ENCODE measurements at regions of chr2 and their contacts with region 1.

Region 1: GRCh38 chr2:101113396-101114267 is 37.5 kb downstream of the TBC1D8 start:
- DNase-seq: peak; percentile 90
- ATAC-seq: peak; percentile 73
- H3K4me3 ChIP-seq: peak overlapping the region; percentile 40; the same call in 1 of the 2 replicates
- H3K27ac ChIP-seq: peak overlapping the region; percentile 94
- H3K4me1 ChIP-seq: peaks cover 61% of the 10 kb centered on the region
- H3K27me3 ChIP-seq: no peaks in the 10 kb centered on the region
- CTCF ChIP-seq: no peak

Region 2: DNA sequence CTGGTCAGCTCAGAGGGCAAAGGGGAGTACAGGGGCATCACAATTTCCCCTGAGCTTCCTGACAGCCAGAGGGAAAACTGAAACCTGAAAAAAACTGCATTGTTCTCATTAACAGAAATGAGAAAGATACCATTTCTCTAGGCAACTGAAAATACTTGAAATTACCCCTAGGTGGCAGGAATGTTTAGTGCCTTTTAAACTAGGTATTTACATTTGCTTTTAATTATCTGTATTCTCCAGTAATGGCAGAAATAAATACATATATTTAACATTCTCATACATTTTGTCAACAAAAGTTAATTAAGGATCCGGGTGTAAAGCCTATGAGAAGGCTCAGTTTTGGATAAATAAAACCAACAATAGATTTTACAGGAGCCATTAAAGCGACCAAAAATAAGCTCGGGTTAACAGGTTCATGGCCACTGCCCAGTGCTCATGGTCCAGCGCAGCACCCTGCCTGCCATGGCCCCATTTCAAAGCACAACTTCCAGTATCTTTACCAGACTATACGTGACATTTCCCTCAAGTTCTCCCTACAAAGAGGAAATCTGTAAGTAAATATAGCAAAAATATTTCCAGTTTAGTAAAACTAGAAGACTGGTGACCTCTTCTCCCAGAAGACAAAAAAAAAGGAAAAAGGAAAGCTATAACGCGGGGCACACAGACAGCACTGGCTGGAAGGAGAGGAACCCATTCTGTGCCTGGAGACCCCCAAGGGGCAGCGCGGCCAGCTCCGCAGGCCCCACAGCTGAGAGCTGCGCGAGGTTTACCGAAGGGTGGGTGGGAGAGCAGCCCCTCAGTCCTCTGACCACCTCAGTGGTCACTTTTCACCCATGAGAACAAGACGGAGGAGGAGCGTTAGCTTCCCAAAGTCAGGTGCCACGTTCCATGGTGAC is 76.8 kb before region 1 on chr2:
- CTCF ChIA-PET with region 1: no interaction called
- POLR2A ChIA-PET with region 1: no interaction called
- intact Hi-C with region 1: loop called (anchors 5 kb)
- DNase-seq: peak; percentile 60
- ATAC-seq: peak; percentile 15; the same call in 1 of the 2 replicates
- H3K4me3 ChIP-seq: no peak overlapping the region
- H3K27ac ChIP-seq: no peak overlapping the region
- H3K4me1 ChIP-seq: no peaks in the 10 kb centered on the region
- H3K27me3 ChIP-seq: no peaks in the 10 kb centered on the region
- CTCF ChIP-seq: peak; percentile 75

Region 3: DNA sequence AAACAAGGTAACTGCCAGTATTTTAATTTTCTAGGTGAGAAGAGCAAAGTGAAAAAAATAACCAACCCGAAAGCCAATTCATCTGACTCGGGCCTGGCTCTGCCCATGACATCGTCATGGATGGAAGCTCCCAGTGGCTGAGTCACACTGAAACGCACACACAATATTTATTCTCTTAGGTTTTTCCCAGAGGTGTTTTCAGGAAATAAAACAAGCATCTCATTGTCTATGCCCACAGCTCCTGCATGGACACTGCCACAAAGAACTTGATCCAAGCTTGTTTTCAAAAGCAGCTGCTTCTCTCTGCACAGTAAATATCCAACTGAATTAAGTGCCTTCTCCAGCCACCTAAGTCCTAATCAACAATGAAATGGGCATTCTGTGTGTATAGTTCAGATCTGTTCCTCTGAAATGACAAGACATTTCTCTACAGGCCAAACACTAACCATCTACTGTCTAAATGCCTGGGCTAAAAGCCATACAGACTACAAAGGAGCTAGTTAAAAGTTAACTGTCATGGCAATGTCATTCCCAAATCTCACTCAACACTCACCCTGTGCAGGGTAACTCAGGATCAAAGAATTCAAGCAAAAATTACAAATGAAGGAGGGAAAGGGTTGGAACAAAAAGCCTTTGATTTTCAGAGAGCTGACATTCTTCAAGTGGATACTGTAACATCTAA is 48.6 kb before region 1 on chr2:
- CTCF ChIA-PET with region 1: no interaction called
- POLR2A ChIA-PET with region 1: interaction called, 3 read pairs
- intact Hi-C with region 1: loop called (anchors 1 kb)
- DNase-seq: peak; percentile 91
- ATAC-seq: peak; percentile 97
- H3K4me3 ChIP-seq: peak overlapping the region; percentile 8; the same call in 1 of the 2 replicates
- H3K27ac ChIP-seq: peak overlapping the region; percentile 97
- H3K4me1 ChIP-seq: peaks cover 27% of the 10 kb centered on the region
- H3K27me3 ChIP-seq: no peaks in the 10 kb centered on the region
- CTCF ChIP-seq: no peak

Region 4: DNA sequence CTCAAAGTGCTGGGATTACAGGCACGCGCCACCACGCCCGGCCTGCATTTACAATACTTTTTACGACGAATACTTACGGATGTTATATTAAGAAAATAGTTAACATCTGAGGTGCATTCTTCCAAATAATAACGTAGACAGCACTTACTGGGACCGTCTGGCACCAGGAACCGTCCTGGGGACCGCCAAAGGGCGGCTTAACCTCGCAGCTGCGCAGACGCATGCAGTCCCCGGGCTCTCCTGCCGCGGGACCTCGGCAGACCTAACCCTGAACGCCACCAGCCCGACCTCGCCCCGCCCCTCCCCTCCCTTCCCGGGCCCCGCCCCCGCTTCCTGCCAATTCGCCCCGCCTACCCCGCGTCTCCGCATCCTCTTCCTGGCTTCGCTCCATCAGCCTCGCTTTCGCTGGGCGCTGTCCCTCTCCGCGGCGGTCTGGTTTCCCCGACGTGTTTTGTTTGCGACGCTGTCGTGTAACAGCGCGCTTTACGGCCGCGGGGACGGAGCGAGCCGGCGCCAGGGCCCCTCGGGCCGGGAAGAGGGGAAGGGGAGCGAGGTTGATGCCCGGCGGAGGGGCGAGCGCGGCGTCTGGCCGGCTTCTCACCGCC is 138.9 kb after region 1 on chr2 and contains the start of gene CNOT11:
- CTCF ChIA-PET with region 1: no interaction called
- POLR2A ChIA-PET with region 1: no interaction called
- intact Hi-C with region 1: no loop called
- DNase-seq: peak; percentile 99
- ATAC-seq: peak; percentile 85
- H3K4me3 ChIP-seq: peak within 1 kb of the TSS; percentile 95
- H3K27ac ChIP-seq: peak within 1 kb of the TSS; percentile 67
- H3K4me1 ChIP-seq: peaks cover 30% of the 10 kb centered on the region
- H3K27me3 ChIP-seq: no peaks in the 10 kb centered on the region
- CTCF ChIP-seq: no peak
- total RNA-seq, gene CNOT11: 44.9 and 48.5 TPM in 2 replicates